Posterior vena cava (tissue), 2 donors: ENCODE measurements at regions of chr9 and their contacts with region 1.

Region 1: DNA sequence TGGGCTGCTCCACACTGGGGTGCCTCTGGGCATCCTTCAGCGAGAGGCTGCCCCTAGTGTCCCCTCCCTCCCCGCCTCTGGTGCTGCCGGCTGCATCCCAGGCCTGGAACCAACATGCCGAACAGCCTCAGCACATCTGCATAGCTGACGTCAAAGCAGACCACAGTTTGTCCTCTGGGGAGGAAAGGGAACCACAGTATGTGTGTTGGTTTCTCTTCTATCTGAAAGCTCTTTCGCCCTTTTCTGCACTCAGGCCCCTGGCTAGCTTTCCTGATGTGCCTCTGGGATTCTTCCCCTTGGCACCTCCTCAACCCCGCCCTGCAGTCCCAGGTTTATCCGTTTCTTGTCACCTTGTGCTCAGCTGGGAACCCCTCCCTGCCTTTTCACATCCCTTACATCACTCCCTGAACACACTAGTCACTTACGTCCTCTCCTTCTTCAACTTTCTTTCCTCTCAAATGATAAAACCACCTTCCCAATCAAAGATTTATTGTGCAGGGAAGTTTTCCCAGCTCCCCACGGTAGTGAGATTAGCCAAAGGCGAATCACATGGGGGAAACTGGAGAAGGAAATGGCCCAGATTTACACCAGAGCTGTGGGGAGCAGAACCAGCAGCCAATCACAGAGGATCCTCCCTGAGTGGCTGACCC is 35.5 kb upstream of the B4GALT1 start:
- DNase-seq: peak; percentile 90

Region 2: GRCh38 chr9:31824860-31825259 is 1377.8 kb before region 1 on chr9:
- intact Hi-C with region 1: no loop called
- DNase-seq: no peak

Region 3: GRCh38 chr9:33101108-33101951 is 101.3 kb before region 1 on chr9:
- intact Hi-C with region 1: loop called in 1 of 2 experiments (anchors 5 kb)
- DNase-seq: no peak

Region 4: GRCh38 chr9:33159760-33160127 is 42.9 kb before region 1 on chr9:
- intact Hi-C with region 1: loop called in 1 of 2 experiments (anchors 10 kb)
- DNase-seq: peak; percentile 92

Region 5: GRCh38 chr9:33167046-33167808 is 35.5 kb before region 1 on chr9 and contains the start of gene B4GALT1:
- intact Hi-C with region 1: loop called in 1 of 2 experiments (anchors 5 kb)
- DNase-seq: peak; percentile 99
- total RNA-seq, gene B4GALT1: 76.8 to 107 TPM

Region 6: DNA sequence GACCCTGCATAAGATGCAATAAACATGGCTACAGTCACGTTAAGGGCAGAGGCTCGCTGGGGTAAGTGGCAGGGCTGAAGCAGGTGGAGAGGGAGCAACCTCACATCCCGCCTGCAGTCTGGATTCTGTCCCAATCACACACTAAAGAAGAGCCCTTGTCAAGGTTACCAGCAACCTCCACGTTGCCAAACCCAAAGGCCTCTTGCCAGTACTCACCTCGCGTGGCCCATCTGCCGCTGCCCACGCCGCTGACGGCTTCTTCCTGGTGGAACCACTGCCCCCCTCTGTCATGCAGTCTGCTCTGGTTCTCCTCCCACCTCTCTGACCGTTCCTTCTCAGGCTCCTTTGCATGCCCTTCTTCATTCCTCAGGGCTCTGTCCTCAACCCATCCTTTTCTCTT is 190.9 kb after region 1 on chr9:
- intact Hi-C with region 1: no loop called
- DNase-seq: no peak